ENCODE measurements at regions of chr17 and their contacts with region 1.

Region 1: DNA sequence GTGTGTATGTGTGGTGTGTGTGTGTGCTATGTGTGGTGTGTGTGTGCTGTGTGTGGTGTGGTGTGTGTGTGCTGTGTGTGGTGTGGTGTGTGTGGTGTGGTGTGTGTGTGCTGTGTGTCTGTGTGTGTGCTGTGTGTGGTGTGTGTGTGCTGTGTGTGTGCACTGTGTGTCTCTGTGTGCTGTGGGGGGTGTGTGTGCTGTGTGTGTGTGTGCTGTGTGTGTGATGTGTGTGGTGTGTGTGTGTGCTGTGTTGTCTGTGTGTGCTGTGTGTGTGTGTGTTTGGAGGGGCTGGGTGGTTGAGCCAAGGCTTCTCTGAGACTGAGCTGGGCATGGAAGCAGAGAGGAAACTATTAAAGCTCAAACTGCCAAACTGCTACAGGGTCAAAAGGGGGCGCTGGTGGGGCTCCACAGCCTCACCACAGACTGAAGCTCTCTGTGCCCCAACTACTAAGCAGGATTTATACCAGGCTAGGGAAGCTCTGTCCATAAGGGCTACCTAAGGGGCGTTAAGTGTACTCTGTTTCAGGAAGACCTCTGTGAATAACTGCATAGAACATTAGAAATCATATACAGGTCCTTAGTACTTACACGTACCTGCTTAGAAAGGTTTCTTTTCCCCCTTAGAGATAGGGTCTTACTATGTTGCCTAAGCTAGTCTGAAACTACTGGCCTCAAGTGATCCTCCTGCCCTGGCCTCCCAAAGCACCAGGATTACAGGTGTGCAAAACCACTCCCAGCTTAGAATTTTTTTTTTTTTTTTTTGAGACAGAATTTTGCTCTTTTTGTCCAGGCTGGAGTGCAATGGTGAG is 27.8 kb upstream of the GHDC start:
- DNase-seq: peak; percentile 15 to 59
- H3K4me3 ChIP-seq: no peak overlapping the region
- H3K27ac ChIP-seq: no peak overlapping the region
- H3K4me1 ChIP-seq: no peaks in the 10 kb centered on the region
- H3K27me3 ChIP-seq: no peaks in the 10 kb centered on the region
- CTCF ChIP-seq: peak; percentile 82 to 90 (median 88)
- EP300 ChIP-seq: no peak
- POLR2A ChIP-seq: no peak
- RAD21 ChIP-seq: peak; percentile 85 to 88

Region 2: DNA sequence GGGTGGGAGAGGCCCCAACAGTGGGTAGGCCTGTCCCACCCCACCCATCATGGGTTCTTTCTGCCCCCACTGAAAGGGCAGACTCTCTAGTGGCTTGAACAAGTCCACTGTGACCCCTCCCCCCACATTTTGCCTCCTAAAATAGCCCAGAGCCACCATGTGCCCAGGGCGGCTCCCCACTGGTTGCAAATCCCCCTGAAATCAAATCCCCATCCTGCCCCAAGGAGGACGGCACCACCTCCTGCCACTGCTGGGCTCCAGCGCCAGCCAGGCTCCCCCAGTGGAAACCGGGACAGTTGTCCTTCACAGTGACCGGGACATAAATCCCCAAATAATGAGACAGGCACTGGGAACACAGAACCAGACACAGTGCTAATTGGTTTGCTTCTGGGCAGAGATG is 144.4 kb before region 1 on chr17:
- CTCF ChIA-PET with region 1: no interaction called
- POLR2A ChIA-PET with region 1: no interaction called
- DNase-seq: no peak
- H3K4me3 ChIP-seq: no peak overlapping the region
- H3K27ac ChIP-seq: no peak overlapping the region
- H3K4me1 ChIP-seq: peaks cover 0 to 4% (median 3%) of the 10 kb centered on the region in 4 experiments; a peak in 3 of 7 replicates
- H3K27me3 ChIP-seq: no peaks in the 10 kb centered on the region
- CTCF ChIP-seq: no peak
- EP300 ChIP-seq: no peak
- POLR2A ChIP-seq: no peak
- RAD21 ChIP-seq: no peak

Region 3: DNA sequence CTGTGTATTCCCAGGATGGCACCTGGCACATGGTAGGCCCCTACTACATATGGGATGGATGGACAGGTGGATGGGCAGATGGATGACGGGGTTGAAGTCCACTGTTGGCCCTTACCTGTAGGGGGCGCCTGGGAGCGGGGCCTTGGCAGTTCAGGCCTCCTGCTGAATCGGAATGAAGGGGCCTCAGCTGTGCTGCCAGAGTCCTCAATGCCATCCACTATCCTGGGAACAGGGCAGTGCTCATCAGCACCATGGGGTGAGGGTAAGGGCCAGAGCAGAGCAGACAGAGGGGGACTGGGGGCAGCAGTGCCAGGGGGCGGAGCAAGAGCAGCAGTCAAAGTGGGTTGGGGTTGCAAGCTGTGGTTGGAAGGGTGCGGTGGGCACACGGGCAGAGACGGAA is 59.0 kb before region 1 on chr17:
- CTCF ChIA-PET with region 1: interaction called, 11 read pairs
- POLR2A ChIA-PET with region 1: no interaction called
- DNase-seq: peak in 1 of 2 experiments; percentile 94
- H3K4me3 ChIP-seq: no peak overlapping the region
- H3K27ac ChIP-seq: no peak overlapping the region
- H3K4me1 ChIP-seq: no peaks in the 10 kb centered on the region; a peak in 2 of 7 replicates
- H3K27me3 ChIP-seq: no peaks in the 10 kb centered on the region
- CTCF ChIP-seq: peak; percentile 84 to 96 (median 95)
- EP300 ChIP-seq: no peak
- POLR2A ChIP-seq: no peak
- RAD21 ChIP-seq: peak; percentile 64 to 73

Region 4: DNA sequence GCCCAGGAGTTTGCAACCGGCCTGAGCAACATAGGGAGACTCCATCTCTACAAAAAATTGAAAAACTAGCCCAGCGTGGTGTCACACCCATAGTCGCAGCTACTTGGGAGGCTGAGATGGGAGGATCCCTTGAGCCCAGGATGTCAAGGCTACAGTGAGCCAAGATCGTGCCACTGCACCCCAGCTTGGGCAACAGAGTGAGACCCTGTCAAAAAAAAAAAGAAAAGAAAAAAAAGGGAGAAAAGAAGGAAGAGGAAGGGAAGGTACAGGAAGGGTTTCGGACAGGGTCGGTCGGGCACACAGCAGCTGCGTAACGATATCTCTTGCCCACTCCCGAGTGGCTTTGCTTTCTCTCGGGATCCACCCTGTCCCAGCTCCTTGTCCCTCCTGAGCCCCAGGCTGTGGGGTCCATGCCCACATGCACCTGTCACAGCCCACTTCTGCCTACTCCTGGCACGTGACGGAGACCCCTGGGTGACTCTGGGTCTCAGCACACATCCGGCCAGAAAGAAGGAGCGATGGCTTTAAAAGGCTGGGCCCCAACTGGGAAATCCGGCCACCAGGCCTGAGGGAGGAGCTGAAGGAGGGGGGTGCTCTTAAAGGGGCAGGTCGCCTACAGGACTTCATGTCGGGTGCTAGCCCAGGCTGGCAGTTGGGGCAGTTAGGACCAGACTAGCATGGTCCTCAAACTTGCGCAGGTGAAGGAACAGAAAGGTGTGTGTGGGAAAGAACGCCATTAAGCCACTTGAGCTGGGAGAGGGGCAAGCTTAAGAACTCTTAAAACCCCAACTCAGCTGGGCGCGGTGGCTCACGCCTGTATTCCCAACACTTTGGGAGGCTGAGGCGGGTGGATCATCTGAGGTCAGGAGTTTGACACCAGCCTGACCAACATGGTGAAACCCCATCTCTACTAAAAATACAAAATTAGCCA is 27.9 kb before region 1 on chr17 and contains the start of gene GHDC:
- CTCF ChIA-PET with region 1: interaction called, 34 read pairs
- POLR2A ChIA-PET with region 1: interaction called, 3 read pairs
- DNase-seq: peak in 1 of 2 experiments; percentile 74
- H3K4me3 ChIP-seq: peak within 1 kb of the TSS in 3 of 4 experiments; percentile 16 to 52 (median 19); a peak in 5 of 8 replicates
- H3K27ac ChIP-seq: no peak within 1 kb of the TSS
- H3K4me1 ChIP-seq: peaks cover 0 to 4% (median 3%) of the 10 kb centered on the region in 4 experiments; a peak in 5 of 7 replicates
- H3K27me3 ChIP-seq: no peaks in the 10 kb centered on the region
- CTCF ChIP-seq: no peak
- EP300 ChIP-seq: no peak
- POLR2A ChIP-seq: no peak
- RAD21 ChIP-seq: no peak
- total RNA-seq, gene GHDC: 7.1 and 7.4 TPM in 2 replicates

Region 5: DNA sequence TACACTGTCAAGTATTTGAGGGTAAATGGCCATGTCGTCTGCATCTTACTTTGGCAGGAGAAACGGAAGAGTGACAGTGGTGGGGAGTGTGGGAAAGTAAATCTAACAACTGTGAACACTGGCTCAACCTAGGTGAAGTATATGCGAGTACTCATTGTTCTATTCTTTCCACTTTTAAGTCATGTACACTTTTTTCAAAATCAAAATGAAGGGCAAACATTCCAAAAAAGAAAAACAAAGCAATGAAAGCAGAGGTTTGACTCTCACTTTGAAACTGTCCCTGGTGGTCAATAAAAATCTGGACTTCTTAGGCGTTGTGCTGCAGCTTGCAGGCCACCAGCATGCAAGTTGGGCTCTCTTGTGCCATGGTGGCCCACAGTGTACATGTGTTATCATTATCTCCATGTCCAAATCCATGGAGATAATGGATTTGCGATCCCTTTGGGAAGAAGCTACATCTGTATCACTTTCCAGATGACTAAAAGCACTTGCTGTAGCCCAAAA is 21.4 kb after region 1 on chr17:
- CTCF ChIA-PET with region 1: interaction called, 56 read pairs
- POLR2A ChIA-PET with region 1: no interaction called
- DNase-seq: no peak
- H3K4me3 ChIP-seq: no peak overlapping the region
- H3K27ac ChIP-seq: no peak overlapping the region
- H3K4me1 ChIP-seq: no peaks in the 10 kb centered on the region; a peak in 1 of 7 replicates
- H3K27me3 ChIP-seq: no peaks in the 10 kb centered on the region
- CTCF ChIP-seq: no peak
- EP300 ChIP-seq: no peak
- POLR2A ChIP-seq: no peak
- RAD21 ChIP-seq: no peak

Region 6: DNA sequence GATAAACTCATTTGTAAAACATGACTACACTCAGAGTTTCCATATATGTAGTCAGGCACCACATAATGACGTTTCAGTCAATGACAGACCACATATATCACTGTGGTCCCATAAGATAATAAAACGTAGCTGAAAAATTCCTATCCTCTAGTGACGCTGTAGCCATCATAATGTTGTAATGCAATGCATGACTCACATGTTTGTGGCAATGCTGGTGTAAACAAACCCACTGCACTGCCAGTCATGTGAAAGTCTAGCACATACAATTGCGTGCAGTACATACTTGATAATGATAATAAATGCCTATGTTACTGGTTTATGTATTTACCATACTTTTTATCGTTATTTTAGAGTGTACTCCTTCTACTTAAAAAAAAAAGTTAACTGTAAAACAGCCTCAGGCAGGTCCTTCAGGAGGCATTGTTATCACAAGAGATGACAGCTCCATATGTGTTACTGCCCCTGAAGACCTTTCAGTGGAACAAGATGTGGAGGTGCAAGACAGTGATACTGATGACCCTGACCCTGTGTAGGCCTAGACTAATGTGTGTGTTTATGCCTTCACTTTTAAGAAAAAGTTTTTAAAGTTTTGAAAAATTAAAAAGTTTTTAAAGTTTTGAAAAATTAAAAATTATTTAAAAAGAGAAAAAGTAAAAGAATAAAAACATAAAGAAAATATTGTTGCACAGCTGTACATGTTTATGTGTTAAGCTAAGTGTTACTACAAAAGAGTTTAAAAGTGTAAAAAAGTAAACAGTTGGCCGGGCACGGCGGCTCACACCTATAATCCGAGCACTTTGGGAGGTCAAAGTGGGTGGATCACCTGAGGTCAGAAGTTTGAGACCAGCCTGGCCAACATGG is 45.0 kb after region 1 on chr17:
- CTCF ChIA-PET with region 1: interaction called, 15 read pairs
- POLR2A ChIA-PET with region 1: no interaction called
- DNase-seq: no peak
- H3K4me3 ChIP-seq: no peak overlapping the region
- H3K27ac ChIP-seq: no peak overlapping the region
- H3K4me1 ChIP-seq: peaks cover 0 to 5% (median under 1%) of the 10 kb centered on the region in 4 experiments; a peak in 2 of 7 replicates
- H3K27me3 ChIP-seq: no peaks in the 10 kb centered on the region
- CTCF ChIP-seq: no peak
- EP300 ChIP-seq: no peak
- POLR2A ChIP-seq: no peak
- RAD21 ChIP-seq: no peak

Region 7: DNA sequence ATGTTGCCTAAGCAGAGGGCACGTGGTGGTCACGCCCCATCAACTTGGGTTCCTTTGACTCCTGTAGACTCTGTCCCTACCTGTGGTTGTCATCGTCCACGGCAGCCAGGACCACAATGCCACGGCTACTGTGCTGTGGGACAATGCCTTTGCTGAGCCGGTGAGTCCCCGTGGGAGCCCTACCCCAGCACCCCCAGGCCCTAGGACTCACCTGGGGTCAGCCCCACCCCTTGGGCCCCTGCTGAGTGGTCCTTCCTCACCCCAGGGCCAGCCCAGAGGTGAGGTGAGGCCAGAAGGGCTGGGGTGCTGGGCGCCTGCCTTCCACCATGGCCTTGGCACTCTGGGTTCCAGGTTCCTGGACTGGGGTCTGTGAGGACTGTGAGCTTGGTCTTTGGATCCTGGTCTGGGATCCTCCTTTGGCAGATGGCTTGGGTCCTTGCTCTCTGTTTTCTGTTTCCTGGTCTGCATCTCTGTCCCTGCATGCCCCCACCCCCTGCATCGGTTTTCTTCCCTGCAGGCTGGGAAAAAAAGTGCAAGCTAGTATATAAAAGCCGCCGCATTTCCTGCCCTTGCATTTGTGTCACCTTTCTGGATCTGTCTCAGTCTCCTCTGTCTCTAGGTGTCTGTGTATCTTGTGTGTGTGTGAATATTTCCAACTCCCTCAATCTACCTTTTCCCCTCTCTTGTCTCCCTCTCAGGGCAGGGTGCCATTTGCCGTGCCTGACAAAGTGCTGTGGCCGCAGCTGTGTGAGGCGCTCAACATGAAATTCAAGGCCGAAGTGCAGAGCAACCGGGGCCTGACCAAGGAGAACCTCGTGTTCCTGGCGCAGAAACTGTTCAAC is 83.6 kb after region 1 on chr17:
- CTCF ChIA-PET with region 1: interaction called, 16 read pairs
- POLR2A ChIA-PET with region 1: no interaction called
- DNase-seq: no peak
- H3K4me3 ChIP-seq: no peak overlapping the region
- H3K27ac ChIP-seq: no peak overlapping the region
- H3K4me1 ChIP-seq: peaks cover 0 to 5% (median 4%) of the 10 kb centered on the region in 4 experiments; a peak in 4 of 7 replicates
- H3K27me3 ChIP-seq: no peaks in the 10 kb centered on the region
- CTCF ChIP-seq: no peak
- EP300 ChIP-seq: no peak
- POLR2A ChIP-seq: no peak
- RAD21 ChIP-seq: no peak

Region 8: DNA sequence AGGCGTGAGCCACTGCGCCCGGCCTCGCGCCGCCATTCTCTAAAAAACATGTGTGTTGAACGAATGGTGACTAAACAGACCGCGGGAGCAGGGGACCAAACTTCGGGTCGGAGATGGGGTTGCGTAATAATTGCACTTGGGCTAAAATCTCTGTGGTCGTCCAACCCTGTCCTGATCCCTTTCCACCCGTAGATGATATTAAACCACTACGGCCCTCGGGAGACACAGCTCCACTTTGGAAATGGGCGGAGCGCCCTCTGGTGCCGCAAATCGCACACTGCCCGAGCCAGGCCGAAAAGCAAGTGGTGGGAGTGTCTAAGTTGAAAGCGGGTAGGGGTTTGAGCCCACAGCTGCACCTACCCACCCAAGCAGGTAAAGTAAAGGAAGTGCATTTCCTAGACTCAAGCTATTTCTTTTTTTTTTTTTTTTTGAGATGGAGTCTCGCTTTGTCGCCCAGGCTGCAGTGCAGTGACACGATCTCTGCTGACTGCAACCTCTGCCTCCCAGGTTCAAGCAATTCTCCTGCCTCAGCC is 183.9 kb after region 1 on chr17:
- CTCF ChIA-PET with region 1: interaction called, 18 read pairs
- POLR2A ChIA-PET with region 1: no interaction called
- DNase-seq: peak in 1 of 2 experiments; percentile 96
- H3K4me3 ChIP-seq: no peak overlapping the region
- H3K27ac ChIP-seq: no peak overlapping the region
- H3K4me1 ChIP-seq: peaks cover 8 to 22% (median 17%) of the 10 kb centered on the region in 4 experiments; a peak in 6 of 7 replicates
- H3K27me3 ChIP-seq: no peaks in the 10 kb centered on the region
- CTCF ChIP-seq: peak; percentile 90 to 94 (median 93)
- EP300 ChIP-seq: no peak
- POLR2A ChIP-seq: no peak
- RAD21 ChIP-seq: peak; percentile 95 to 97

Measured in H1 (cell line).